ENCODE measurements at regions of chr6 and their contacts with region 1.

Region 1: GRCh38 chr6:25278914-25279747 is at the start of gene CARMIL1:
- DNase-seq: peak; percentile 92
- H3K4me3 Mint-ChIP-seq: peak within 1 kb of the TSS; percentile 96
- H3K27ac Mint-ChIP-seq: peak within 1 kb of the TSS; percentile 93
- H3K4me1 Mint-ChIP-seq: peaks cover 31% of the 10 kb centered on the region
- H3K27me3 Mint-ChIP-seq: no peaks in the 10 kb centered on the region
- CTCF ChIP-seq: peak; percentile 83
- total RNA-seq, gene CARMIL1: 23.0 and 25.2 TPM in 2 replicates

Region 2: GRCh38 chr6:25263657-25264056 is 15.5 kb before region 1 on chr6:
- CTCF ChIA-PET with region 1: interaction called, 29 read pairs
- POLR2A ChIA-PET with region 1: interaction called, 4 read pairs
- intact Hi-C with region 1: no loop called
- DNase-seq: peak; percentile 30
- H3K4me3 Mint-ChIP-seq: no peak overlapping the region
- H3K27ac Mint-ChIP-seq: no peak overlapping the region
- H3K4me1 Mint-ChIP-seq: peaks cover 8% of the 10 kb centered on the region
- H3K27me3 Mint-ChIP-seq: no peaks in the 10 kb centered on the region
- CTCF ChIP-seq: no peak

Region 3: DNA sequence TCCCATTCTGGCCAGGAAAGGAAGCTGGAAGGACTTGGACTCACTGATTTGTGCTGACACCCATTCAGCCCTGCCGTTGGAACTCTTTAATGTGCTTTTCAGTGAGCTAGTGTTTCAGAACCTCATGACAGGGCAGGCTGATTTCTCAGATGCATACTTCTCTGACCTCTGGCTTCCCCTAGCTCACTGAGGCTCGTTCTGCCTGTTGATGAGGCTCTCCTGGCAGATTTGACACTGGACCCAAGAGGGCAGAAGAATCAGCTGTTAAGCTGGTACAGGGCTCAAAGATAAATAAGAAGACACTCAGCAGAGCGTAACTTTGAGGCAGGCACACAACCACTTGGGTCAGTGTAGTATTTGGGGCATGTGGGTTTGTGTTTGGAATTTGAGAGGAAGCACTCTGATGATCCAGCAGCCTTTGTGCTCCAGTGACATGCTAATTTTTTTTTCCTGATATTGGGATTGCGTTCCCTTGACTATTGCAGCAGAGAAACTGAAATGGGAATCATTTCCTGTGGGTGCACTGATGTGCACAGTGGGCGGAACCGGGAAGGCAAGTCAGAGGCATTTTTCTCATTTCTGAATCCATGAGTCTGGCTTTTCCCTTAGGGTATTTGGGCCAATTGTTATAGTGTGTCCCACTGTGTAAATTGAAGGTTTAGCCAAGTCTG is 80.2 kb after region 1 on chr6:
- CTCF ChIA-PET with region 1: interaction called, 14 read pairs
- POLR2A ChIA-PET with region 1: interaction called, 25 read pairs
- intact Hi-C with region 1: no loop called
- DNase-seq: peak; percentile 81
- H3K4me3 Mint-ChIP-seq: peak overlapping the region; percentile 56
- H3K27ac Mint-ChIP-seq: peak overlapping the region; percentile 80
- H3K4me1 Mint-ChIP-seq: peaks cover 26% of the 10 kb centered on the region
- H3K27me3 Mint-ChIP-seq: no peaks in the 10 kb centered on the region
- CTCF ChIP-seq: no peak

Region 4: GRCh38 chr6:25456249-25457040 is 177.3 kb after region 1 on chr6:
- CTCF ChIA-PET with region 1: interaction called, 12 read pairs
- POLR2A ChIA-PET with region 1: interaction called, 4 read pairs
- intact Hi-C with region 1: no loop called
- DNase-seq: no peak
- H3K4me3 Mint-ChIP-seq: no peak overlapping the region
- H3K27ac Mint-ChIP-seq: no peak overlapping the region
- H3K4me1 Mint-ChIP-seq: no peaks in the 10 kb centered on the region
- H3K27me3 Mint-ChIP-seq: no peaks in the 10 kb centered on the region
- CTCF ChIP-seq: no peak

Region 5: DNA sequence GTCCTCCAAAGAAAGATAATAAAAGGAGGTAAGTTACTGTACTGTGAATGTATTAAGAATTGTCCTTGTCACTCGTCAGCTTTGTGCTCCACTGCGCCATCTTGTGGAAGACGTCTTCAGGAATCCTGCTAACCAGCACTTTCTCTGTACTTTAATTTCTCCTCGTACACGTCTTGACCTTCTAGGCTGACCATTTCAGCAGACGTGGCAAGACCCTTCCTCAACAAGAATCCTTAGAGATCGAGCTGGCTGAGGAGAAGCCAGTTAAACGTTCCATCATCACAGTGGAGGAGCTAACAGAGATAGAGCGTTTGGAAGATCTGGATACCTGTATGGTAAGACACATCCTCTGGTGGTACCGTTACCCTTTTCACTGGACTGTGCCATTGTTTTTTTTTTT is 277.4 kb after region 1 on chr6:
- CTCF ChIA-PET with region 1: interaction called, 8 read pairs
- POLR2A ChIA-PET with region 1: interaction called, 10 read pairs
- intact Hi-C with region 1: no loop called
- DNase-seq: peak; percentile 83
- H3K4me3 Mint-ChIP-seq: no peak overlapping the region
- H3K27ac Mint-ChIP-seq: no peak overlapping the region
- H3K4me1 Mint-ChIP-seq: peaks cover 5% of the 10 kb centered on the region
- H3K27me3 Mint-ChIP-seq: no peaks in the 10 kb centered on the region
- CTCF ChIP-seq: peak; percentile 69